B cell (primary cell): ENCODE measurements at regions of chr19 and their contacts with region 1.

Region 1: DNA sequence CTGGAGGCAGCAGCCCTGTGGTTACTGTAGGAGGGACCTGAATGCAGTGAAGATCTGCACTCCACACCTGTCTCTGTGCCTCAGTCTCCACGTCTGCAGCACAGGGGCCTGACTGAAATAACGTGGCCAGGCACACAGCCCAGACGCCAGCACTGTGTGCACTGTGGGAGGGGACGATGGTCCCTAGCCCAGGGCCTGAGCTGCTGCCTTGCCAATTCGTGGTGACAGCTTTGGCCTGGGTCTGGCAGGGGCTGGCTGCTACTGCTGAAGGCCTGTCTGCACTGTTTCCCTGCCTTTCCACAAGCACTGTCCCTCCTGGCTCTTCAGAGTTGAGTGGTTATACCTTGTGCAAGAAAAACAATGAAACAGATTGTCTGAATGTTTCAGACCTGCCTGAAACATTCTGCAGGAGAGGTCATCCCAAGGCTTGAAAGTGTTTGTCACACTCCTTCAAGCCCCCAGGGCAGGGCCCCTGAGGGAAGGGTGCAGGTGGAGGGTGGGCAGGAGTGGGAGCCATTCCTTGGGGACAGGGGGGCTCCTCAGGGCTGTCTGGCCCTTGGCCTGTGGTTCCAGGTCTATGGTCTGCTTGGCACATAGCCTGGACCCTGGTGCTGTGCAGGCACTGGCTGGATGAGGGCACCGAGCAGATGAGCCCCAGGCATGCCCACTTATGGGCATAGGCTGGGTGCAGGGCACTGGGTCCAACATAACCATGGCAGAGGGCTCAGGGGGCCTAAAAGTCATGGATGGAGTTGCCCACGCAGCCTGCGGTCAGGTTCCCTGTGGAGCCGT is 38.7 kb upstream of the LDLR start:
- DNase-seq: no peak
- ATAC-seq: no peak
- H3K4me3 ChIP-seq: no peak overlapping the region
- H3K4me3 Mint-ChIP-seq: peak overlapping the region; percentile 69
- H3K27ac ChIP-seq: no peak overlapping the region
- H3K27ac Mint-ChIP-seq: no peak overlapping the region
- H3K4me1 ChIP-seq: peaks cover 78 to 92% of the 10 kb centered on the region in 2 donors
- H3K4me1 Mint-ChIP-seq: peaks cover 72% of the 10 kb centered on the region
- H3K27me3 ChIP-seq: peaks cover 0 to 29% (median 4%) of the 10 kb centered on the region in 4 experiments
- H3K27me3 Mint-ChIP-seq: peaks cover 17% of the 10 kb centered on the region
- CTCF ChIP-seq: no peak

Region 2: DNA sequence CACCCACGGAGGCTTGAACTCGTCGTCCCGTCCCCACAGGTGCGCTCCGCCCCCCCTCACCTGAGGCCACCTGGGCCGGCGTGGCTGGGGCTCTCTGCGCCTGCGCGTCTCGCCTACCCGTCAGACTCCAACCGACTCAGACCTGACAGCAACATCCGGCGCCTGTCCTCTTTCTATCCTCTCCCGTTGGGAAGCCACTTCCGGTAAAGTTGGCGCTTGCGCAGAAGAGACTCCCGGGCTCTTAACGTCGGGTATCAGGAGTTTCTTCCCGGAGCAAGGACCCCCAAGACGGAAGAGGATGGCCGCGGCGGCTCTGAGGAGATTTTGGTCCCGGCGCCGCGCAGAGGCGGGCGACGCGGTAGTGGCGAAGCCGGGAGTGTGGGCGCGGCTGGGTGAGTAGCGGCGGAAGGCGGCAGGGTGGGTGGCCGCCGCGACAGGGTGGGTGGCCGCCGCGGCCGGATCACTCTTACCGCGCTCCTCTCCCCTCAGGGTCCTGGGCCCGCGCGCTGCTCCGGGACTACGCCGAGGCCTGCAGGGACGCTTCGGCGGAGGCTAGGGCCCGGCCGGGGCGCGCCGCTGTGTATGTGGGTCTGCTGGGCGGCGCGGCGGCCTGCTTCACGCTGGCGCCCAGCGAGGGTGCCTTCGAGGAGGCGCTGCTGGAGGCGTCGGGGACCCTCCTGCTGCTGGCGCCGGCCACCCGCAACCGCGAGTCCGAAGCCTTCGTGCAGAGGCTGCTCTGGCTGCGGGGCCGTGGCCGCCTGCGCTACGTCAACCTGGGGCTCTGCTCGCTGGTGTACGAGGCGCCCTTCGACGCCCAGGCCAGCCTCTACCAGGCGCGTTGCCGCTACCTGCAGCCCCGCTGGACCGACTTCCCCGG is 121.8 kb before region 1 on chr19 and contains the starts of genes TIMM29 and YIPF2:
- CTCF ChIA-PET with region 1: no interaction called
- POLR2A ChIA-PET with region 1: no interaction called
- intact Hi-C with region 1: no loop called
- DNase-seq: peak; percentile 92
- ATAC-seq: peak; percentile 82
- H3K4me3 ChIP-seq: peak within 1 kb of the TSS; percentile 54 to 94 (median 83)
- H3K4me3 Mint-ChIP-seq: peak within 1 kb of the TSS; percentile 93
- H3K27ac ChIP-seq: peak within 1 kb of the TSS; percentile 41 to 72
- H3K27ac Mint-ChIP-seq: peak within 1 kb of the TSS; percentile 90
- H3K4me1 ChIP-seq: peaks cover 13 to 24% of the 10 kb centered on the region in 2 donors
- H3K4me1 Mint-ChIP-seq: peaks cover 18% of the 10 kb centered on the region
- H3K27me3 ChIP-seq: no peaks in the 10 kb centered on the region
- H3K27me3 Mint-ChIP-seq: no peaks in the 10 kb centered on the region
- CTCF ChIP-seq: no peak
- total RNA-seq, gene TIMM29: 24.2 and 26.1 TPM in 2 replicates
- total RNA-seq, gene YIPF2: 19.8 and 21.9 TPM in 2 replicates

Region 3: GRCh38 chr19:10960314-10961072 is 90.0 kb before region 1 on chr19 and contains the start of gene SMARCA4:
- CTCF ChIA-PET with region 1: no interaction called
- POLR2A ChIA-PET with region 1: no interaction called
- intact Hi-C with region 1: loop called (anchors 5 kb)
- DNase-seq: peak; percentile 99
- ATAC-seq: peak; percentile 84
- H3K4me3 ChIP-seq: peak within 1 kb of the TSS; percentile 67 to 90 (median 80)
- H3K4me3 Mint-ChIP-seq: peak within 1 kb of the TSS; percentile 93
- H3K27ac ChIP-seq: peak within 1 kb of the TSS; percentile 76 to 84
- H3K27ac Mint-ChIP-seq: peak within 1 kb of the TSS; percentile 96
- H3K4me1 ChIP-seq: peaks cover 22 to 37% of the 10 kb centered on the region in 2 donors
- H3K4me1 Mint-ChIP-seq: peaks cover 40% of the 10 kb centered on the region
- H3K27me3 ChIP-seq: no peaks in the 10 kb centered on the region
- H3K27me3 Mint-ChIP-seq: no peaks in the 10 kb centered on the region
- CTCF ChIP-seq: no peak
- total RNA-seq, gene SMARCA4: 82.3 and 82.7 TPM in 2 replicates

Region 4: GRCh38 chr19:10979951-10980381 is 70.6 kb before region 1 on chr19:
- CTCF ChIA-PET with region 1: no interaction called
- POLR2A ChIA-PET with region 1: no interaction called
- intact Hi-C with region 1: no loop called
- DNase-seq: peak; percentile 63
- ATAC-seq: peak; percentile 77
- H3K4me3 ChIP-seq: no peak overlapping the region
- H3K4me3 Mint-ChIP-seq: peak overlapping the region; percentile 62
- H3K27ac ChIP-seq: no peak overlapping the region
- H3K27ac Mint-ChIP-seq: no peak overlapping the region
- H3K4me1 ChIP-seq: peaks cover 3 to 25% of the 10 kb centered on the region in 2 donors
- H3K4me1 Mint-ChIP-seq: peaks cover 17% of the 10 kb centered on the region
- H3K27me3 ChIP-seq: no peaks in the 10 kb centered on the region
- H3K27me3 Mint-ChIP-seq: no peaks in the 10 kb centered on the region
- CTCF ChIP-seq: peak; percentile 15

Region 5: GRCh38 chr19:11011668-11012067 is 38.9 kb before region 1 on chr19:
- CTCF ChIA-PET with region 1: no interaction called
- POLR2A ChIA-PET with region 1: no interaction called
- intact Hi-C with region 1: no loop called
- DNase-seq: no peak
- ATAC-seq: no peak
- H3K4me3 ChIP-seq: no peak overlapping the region
- H3K4me3 Mint-ChIP-seq: no peak overlapping the region
- H3K27ac ChIP-seq: no peak overlapping the region
- H3K27ac Mint-ChIP-seq: no peak overlapping the region
- H3K4me1 ChIP-seq: no peaks in the 10 kb centered on the region
- H3K4me1 Mint-ChIP-seq: no peaks in the 10 kb centered on the region
- H3K27me3 ChIP-seq: no peaks in the 10 kb centered on the region
- H3K27me3 Mint-ChIP-seq: no peaks in the 10 kb centered on the region
- CTCF ChIP-seq: no peak

Region 6: DNA sequence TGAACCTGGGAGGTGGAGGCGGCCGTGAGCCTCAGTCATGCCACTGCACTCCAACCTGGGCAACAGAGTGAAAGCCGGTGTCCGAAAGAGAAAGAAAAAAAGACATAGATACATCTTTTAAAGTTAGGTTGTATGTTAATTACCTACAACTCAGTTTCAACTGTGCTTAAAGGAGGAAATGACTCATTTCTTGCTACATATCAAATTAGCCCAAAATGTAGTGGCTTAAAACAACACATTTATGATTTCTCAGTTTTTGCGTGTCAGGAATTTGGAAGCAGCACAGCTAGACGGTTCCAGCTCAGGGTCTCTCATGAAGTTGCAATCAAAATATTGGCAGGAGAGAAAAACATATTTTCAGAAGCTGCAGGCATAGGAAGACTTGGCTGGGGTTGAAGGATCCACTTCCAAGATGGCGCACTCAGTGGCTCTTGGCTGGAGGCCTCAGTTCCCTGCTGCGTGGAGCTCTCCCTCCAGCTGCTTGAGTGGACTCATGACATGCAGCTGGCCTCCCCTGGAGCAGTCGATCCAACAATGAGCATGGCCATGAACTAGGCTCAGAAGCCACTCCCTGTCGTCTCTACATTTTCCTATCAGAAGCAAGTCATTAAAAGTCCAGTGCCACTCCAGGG is 45.8 kb after region 1 on chr19:
- CTCF ChIA-PET with region 1: interaction called, 3 read pairs
- POLR2A ChIA-PET with region 1: no interaction called
- intact Hi-C with region 1: loop called (anchors 2 kb)
- DNase-seq: peak; percentile 41
- ATAC-seq: peak; percentile 22
- H3K4me3 ChIP-seq: no peak overlapping the region
- H3K4me3 Mint-ChIP-seq: peak overlapping the region; percentile 12
- H3K27ac ChIP-seq: no peak overlapping the region
- H3K27ac Mint-ChIP-seq: no peak overlapping the region
- H3K4me1 ChIP-seq: peaks cover 41 to 52% of the 10 kb centered on the region in 2 donors
- H3K4me1 Mint-ChIP-seq: peaks cover 30% of the 10 kb centered on the region
- H3K27me3 ChIP-seq: peaks cover 0 to 44% (median 13%) of the 10 kb centered on the region in 4 experiments
- H3K27me3 Mint-ChIP-seq: peaks cover 19% of the 10 kb centered on the region
- CTCF ChIP-seq: no peak

Region 7: GRCh38 chr19:11422163-11423021 is 371.9 kb after region 1 on chr19:
- CTCF ChIA-PET with region 1: no interaction called
- POLR2A ChIA-PET with region 1: no interaction called
- intact Hi-C with region 1: loop called (anchors 5 kb)
- DNase-seq: peak; percentile 92
- ATAC-seq: peak; percentile 85
- H3K4me3 ChIP-seq: peak overlapping the region in 4 of 5 experiments; percentile 40 to 57 (median 46)
- H3K4me3 Mint-ChIP-seq: peak overlapping the region; percentile 84
- H3K27ac ChIP-seq: peak overlapping the region in 1 of 2 donors; percentile 52
- H3K27ac Mint-ChIP-seq: peak overlapping the region; percentile 58
- H3K4me1 ChIP-seq: peaks cover 55 to 61% of the 10 kb centered on the region in 2 donors
- H3K4me1 Mint-ChIP-seq: peaks cover 52% of the 10 kb centered on the region
- H3K27me3 ChIP-seq: peaks cover 0 to 50% (median 24%) of the 10 kb centered on the region in 4 experiments
- H3K27me3 Mint-ChIP-seq: peaks cover 18% of the 10 kb centered on the region
- CTCF ChIP-seq: no peak